Sigmoid colon (tissue), 7 donors: ENCODE measurements at regions of chr21 and their contacts with region 1.

Region 1: DNA sequence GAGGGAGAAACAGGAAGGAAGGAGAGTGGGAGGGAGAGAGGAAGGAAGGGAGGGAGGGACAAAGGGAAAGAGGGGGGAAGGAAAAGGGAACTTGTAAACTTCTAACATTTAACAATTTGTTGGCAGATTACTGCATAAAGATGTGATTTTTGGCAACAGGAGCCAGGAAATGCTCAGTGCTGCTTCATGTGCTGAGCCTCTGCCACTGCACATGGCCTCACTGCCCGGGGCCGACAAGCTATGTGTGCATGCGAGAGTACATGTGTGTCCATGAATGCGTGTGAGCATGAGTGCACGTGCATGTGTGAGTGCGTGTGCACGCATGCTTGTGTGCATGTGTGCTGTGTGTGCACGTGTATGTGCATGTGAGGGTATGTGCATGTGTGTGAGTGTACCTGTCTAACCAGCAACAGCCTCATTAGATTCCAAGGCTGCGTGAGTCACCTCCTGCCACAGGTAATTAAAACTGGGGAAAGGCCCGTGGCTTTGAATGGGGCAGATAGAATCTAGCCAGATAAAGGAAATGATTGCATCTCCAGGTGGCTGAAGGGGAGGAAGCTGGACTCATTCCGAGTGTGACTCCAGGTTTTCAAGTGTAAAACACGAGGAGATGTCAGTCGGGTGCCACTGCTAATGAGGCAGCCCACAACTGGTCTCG is 41.4 kb upstream of the TSPEAR start:
- DNase-seq: no peak
- H3K4me3 ChIP-seq: no peak overlapping the region
- H3K27ac ChIP-seq: no peak overlapping the region
- H3K4me1 ChIP-seq: no peaks in the 10 kb centered on the region
- H3K27me3 ChIP-seq: peaks cover 0 to 31% (median 5%) of the 10 kb centered on the region in 3 donors
- CTCF ChIP-seq: no peak
- EP300 ChIP-seq: no peak
- POLR2A ChIP-seq: no peak

Region 2: DNA sequence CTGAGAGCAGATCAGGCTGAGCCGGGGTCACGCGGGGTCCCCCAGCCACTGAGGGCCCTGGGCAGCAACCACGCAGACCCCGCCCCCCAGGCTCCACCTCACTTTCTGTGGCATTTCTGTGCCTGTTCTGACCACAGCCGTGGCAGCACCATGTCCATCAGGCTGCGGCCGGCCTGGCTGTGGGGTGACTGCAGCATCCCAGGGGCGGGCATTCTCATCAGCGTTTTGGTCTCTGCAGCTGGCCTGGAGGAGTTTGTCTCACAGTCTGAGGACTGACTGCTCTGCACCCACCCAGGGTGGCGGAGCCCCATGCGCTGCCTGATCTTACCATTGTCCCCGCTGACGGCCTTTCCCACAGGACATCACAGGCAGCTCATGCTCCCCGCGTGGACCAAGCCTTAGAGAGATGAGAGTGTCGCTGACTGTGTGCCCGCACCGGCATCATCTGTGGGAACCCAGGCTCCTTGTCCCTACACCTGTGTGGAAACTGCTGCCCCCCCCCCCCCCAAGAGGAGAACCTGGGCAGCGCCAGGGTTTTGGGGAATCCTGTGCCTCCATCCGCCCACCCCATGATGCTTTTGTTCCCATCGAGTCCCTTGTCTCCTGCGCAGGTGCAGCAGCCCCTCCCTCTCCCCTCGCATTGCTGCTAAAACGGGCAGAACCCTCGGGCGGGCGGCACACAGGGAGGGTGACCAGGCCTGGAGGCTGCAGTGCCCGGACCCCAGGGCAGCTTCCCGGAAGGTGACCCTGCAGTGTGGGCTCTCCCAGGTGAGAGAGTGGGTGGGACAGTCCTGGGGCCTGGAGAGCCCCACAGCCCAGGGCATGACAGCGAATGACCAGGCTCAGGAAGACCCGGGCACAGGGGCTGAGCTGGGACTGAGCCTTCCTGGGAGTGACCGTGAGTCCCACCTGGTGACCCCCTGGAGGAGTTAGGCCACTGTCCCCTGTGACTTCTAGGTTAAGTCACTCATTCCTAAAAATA is 214.5 kb before region 1 on chr21:
- intact Hi-C with region 1: no loop called
- DNase-seq: peak; percentile 39
- H3K4me3 ChIP-seq: no peak overlapping the region
- H3K27ac ChIP-seq: no peak overlapping the region
- H3K4me1 ChIP-seq: no peaks in the 10 kb centered on the region
- H3K27me3 ChIP-seq: peaks cover 0 to 10% (median 0%) of the 10 kb centered on the region in 3 donors
- CTCF ChIP-seq: no peak
- EP300 ChIP-seq: no peak
- POLR2A ChIP-seq: no peak

Region 3: DNA sequence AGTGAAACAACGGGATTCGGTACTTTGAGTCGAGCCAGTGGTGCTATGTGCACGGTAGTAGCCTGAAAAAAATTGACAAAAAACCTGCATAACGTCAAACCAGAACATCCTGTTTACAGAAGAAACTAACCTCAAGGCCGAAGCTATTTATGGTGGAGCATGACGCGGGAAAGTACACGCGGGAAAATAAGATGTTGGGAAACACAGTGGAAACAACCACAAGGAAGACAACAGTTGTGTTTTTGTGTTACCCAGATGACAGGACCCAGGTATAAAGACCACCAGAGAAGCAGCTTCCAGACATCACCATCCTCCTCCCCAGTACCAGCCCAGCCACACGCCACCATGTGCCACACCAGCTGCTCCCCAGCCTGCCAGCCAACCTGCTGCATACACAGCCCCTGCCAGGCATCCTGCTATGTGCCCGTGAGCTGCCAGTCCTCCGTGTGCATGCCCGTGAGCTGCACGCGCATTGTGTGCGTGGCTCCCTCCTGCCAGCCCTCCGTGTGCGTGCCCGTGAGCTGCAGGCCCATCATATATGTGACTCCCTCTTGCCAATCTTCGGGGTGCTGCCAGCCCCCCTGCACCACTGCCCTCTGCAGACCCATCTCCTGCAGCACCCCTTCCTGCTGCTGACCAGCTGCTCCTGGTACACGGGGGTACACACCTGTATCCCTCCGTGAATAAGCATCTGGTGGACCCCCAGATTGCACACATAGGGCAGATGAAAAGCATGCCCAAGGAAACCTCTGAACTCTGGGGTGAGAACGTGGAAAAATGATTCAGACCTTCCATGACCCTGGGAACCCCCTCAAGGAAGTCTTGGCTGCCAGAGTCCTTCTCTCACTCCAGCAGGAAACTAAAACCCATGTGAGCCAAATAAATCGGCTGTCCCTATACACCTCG is 94.9 kb before region 1 on chr21 and contains the start of gene KRTAP12-3:
- intact Hi-C with region 1: no loop called
- DNase-seq: no peak
- H3K4me3 ChIP-seq: no peak within 1 kb of the TSS
- H3K27ac ChIP-seq: no peak within 1 kb of the TSS
- H3K4me1 ChIP-seq: no peaks in the 10 kb centered on the region
- H3K27me3 ChIP-seq: peaks cover 0 to 22% (median 5%) of the 10 kb centered on the region in 3 donors
- CTCF ChIP-seq: no peak
- EP300 ChIP-seq: no peak
- POLR2A ChIP-seq: no peak
- total RNA-seq, gene KRTAP12-3: not detected

Region 4: GRCh38 chr21:44697811-44698734 is 54.7 kb before region 1 on chr21:
- intact Hi-C with region 1: loop called (anchors 10 kb)
- DNase-seq: no peak
- H3K4me3 ChIP-seq: no peak overlapping the region
- H3K27ac ChIP-seq: no peak overlapping the region
- H3K4me1 ChIP-seq: no peaks in the 10 kb centered on the region
- H3K27me3 ChIP-seq: peaks cover 10 to 65% (median 43%) of the 10 kb centered on the region in 3 donors
- CTCF ChIP-seq: no peak
- EP300 ChIP-seq: no peak
- POLR2A ChIP-seq: no peak

Region 5: DNA sequence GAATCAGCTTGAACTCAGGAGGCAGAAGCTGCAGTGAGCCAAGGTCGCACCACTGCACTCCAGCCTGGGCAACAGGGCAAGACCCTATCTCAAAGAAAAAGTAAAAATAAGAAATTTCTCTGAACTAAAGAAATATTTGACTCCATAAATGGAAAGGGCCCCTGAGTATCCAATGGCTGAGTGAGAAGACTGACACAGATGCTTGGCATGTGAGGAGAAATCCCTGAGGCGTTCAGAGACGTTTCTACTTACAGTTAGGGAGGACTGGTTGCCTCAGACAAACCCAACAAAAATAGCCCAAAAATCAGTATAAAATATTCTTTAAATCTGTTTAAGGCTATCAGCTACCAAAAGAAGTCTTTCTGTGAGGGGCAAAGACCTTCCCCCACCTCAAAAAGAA is 68.1 kb after region 1 on chr21:
- intact Hi-C with region 1: no loop called
- DNase-seq: peak; percentile 25
- H3K4me3 ChIP-seq: no peak overlapping the region
- H3K27ac ChIP-seq: no peak overlapping the region
- H3K4me1 ChIP-seq: peaks cover 0 to 24% (median 17%) of the 10 kb centered on the region in 4 donors
- H3K27me3 ChIP-seq: no peaks in the 10 kb centered on the region
- CTCF ChIP-seq: no peak
- EP300 ChIP-seq: no peak
- POLR2A ChIP-seq: no peak